ENCODE measurements at regions of chr2 and their contacts with region 1.

Region 1: DNA sequence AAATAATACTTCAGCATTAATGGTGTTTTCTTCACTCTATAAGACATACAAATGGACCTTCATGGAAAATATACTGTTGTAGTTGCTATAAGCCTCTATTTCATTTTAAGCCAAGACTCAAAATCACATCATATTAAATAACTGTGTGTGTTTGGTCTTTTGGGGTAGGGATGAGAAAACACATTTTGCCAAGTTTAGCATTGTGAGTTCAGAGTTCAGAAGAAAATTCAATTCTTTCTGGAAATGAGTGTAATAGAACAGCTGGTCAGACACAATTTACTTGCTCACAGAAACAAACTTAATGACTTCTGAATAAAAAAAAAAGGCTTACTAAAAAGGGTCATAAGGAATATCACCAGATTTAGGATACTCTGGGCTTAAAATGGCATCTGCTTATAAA is 149.5 kb downstream of the LRRTM4 start:
- DNase-seq: no peak
- ATAC-seq: no peak
- H3K4me3 ChIP-seq: no peak overlapping the region
- H3K27ac ChIP-seq: no peak overlapping the region
- H3K4me1 ChIP-seq: no peaks in the 10 kb centered on the region
- H3K27me3 ChIP-seq: no peaks in the 10 kb centered on the region
- CTCF ChIP-seq: no peak

Region 2: GRCh38 chr2:77458216-77458615 is 85.6 kb after region 1 on chr2:
- CTCF ChIA-PET with region 1: no interaction called
- POLR2A ChIA-PET with region 1: interaction called, 16 read pairs
- intact Hi-C with region 1: no loop called
- DNase-seq: no peak
- ATAC-seq: no peak
- H3K4me3 ChIP-seq: no peak overlapping the region
- H3K27ac ChIP-seq: no peak overlapping the region
- H3K4me1 ChIP-seq: no peaks in the 10 kb centered on the region
- H3K27me3 ChIP-seq: no peaks in the 10 kb centered on the region
- CTCF ChIP-seq: no peak

Region 3: GRCh38 chr2:78330193-78330592 is 957.6 kb after region 1 on chr2:
- CTCF ChIA-PET with region 1: no interaction called
- POLR2A ChIA-PET with region 1: no interaction called
- intact Hi-C with region 1: no loop called
- DNase-seq: no peak
- ATAC-seq: no peak
- H3K4me3 ChIP-seq: no peak overlapping the region
- H3K27ac ChIP-seq: no peak overlapping the region
- H3K4me1 ChIP-seq: no peaks in the 10 kb centered on the region
- H3K27me3 ChIP-seq: no peaks in the 10 kb centered on the region
- CTCF ChIP-seq: no peak